MCF 10A (cell line): ENCODE measurements at regions of chrX and their contacts with region 1.

Region 1: DNA sequence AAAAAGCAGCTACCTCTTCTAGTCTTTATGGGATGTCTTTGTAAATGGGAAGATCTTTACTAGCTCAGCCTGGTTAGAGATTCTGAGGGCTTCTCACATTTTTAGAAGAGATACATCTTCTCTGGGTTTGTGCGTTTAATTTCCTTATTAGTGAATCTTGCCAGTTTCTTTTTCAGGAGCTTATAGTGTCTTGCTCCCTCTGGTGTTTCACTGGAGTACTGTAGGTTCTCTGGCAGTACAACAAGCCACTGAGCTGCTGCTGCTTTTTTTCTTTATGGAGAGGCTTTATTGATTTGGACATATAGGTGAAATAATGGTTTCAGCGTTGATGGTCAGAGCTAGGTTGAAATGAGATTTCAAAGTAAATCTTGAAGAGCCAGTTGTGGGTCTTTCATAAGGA is 82.9 kb downstream of the LAS1L start:
- DNase-seq: peak; percentile 44
- H3K4me3 Mint-ChIP-seq: no peak overlapping the region
- H3K27ac Mint-ChIP-seq: no peak overlapping the region
- H3K4me1 Mint-ChIP-seq: no peaks in the 10 kb centered on the region
- H3K27me3 Mint-ChIP-seq: no peaks in the 10 kb centered on the region
- CTCF ChIP-seq: peak; percentile 36

Region 2: GRCh38 chrX:64093761-64094160 is 1357.9 kb before region 1 on chrX:
- CTCF ChIA-PET with region 1: interaction called, 15 read pairs
- POLR2A ChIA-PET with region 1: no interaction called
- intact Hi-C with region 1: no loop called
- DNase-seq: peak; percentile 4
- H3K4me3 Mint-ChIP-seq: no peak overlapping the region
- H3K27ac Mint-ChIP-seq: no peak overlapping the region
- H3K4me1 Mint-ChIP-seq: no peaks in the 10 kb centered on the region
- H3K27me3 Mint-ChIP-seq: no peaks in the 10 kb centered on the region
- CTCF ChIP-seq: peak; percentile 20

Region 3: GRCh38 chrX:64925480-64925879 is 526.2 kb before region 1 on chrX:
- CTCF ChIA-PET with region 1: no interaction called
- POLR2A ChIA-PET with region 1: no interaction called
- intact Hi-C with region 1: no loop called
- DNase-seq: no peak
- H3K4me3 Mint-ChIP-seq: no peak overlapping the region
- H3K27ac Mint-ChIP-seq: no peak overlapping the region
- H3K4me1 Mint-ChIP-seq: no peaks in the 10 kb centered on the region
- H3K27me3 Mint-ChIP-seq: no peaks in the 10 kb centered on the region
- CTCF ChIP-seq: no peak

Region 4: GRCh38 chrX:65241059-65241721 is 210.5 kb before region 1 on chrX:
- CTCF ChIA-PET with region 1: no interaction called
- POLR2A ChIA-PET with region 1: no interaction called
- intact Hi-C with region 1: no loop called
- DNase-seq: no peak
- H3K4me3 Mint-ChIP-seq: no peak overlapping the region
- H3K27ac Mint-ChIP-seq: no peak overlapping the region
- H3K4me1 Mint-ChIP-seq: no peaks in the 10 kb centered on the region
- H3K27me3 Mint-ChIP-seq: no peaks in the 10 kb centered on the region
- CTCF ChIP-seq: no peak

Region 5: GRCh38 chrX:65406532-65406931 is 45.1 kb before region 1 on chrX:
- CTCF ChIA-PET with region 1: no interaction called
- POLR2A ChIA-PET with region 1: no interaction called
- intact Hi-C with region 1: no loop called
- DNase-seq: no peak
- H3K4me3 Mint-ChIP-seq: no peak overlapping the region
- H3K27ac Mint-ChIP-seq: no peak overlapping the region
- H3K4me1 Mint-ChIP-seq: no peaks in the 10 kb centered on the region
- H3K27me3 Mint-ChIP-seq: no peaks in the 10 kb centered on the region
- CTCF ChIP-seq: no peak

Region 6: DNA sequence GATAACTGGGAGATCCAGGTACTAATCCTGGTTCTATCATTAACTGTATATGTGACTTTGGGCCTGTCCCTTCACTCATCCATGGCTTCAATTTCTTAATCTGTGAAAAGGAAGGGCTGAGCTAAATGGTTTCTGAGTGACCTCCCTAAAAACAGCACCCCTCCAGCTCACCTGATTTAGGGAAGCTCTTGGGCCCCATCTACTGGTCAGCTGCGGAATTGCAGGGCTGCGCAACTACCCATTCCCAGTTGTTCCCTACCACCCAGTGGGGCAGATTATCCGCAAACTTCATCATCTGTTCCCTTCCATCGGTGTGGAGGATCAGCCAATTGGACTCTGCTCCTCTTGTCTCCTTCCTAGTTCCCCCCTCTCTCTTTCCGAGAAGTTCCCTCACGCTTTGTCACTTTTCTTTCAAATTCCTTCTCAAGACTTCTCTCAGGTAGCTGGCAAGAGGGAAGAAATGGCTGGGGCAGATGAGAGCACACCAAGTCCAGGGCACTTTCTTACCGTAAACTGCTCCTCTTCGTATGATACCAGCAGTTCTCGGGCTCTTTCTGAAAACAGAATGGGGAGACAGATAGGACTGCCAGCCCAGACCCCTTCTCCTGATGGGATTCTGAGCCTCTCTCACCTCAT is 77.2 kb after region 1 on chrX:
- CTCF ChIA-PET with region 1: interaction called, 15 read pairs
- POLR2A ChIA-PET with region 1: no interaction called
- intact Hi-C with region 1: no loop called
- DNase-seq: peak; percentile 40
- H3K4me3 Mint-ChIP-seq: no peak overlapping the region
- H3K27ac Mint-ChIP-seq: no peak overlapping the region
- H3K4me1 Mint-ChIP-seq: no peaks in the 10 kb centered on the region
- H3K27me3 Mint-ChIP-seq: no peaks in the 10 kb centered on the region
- CTCF ChIP-seq: peak; percentile 94

Region 7: DNA sequence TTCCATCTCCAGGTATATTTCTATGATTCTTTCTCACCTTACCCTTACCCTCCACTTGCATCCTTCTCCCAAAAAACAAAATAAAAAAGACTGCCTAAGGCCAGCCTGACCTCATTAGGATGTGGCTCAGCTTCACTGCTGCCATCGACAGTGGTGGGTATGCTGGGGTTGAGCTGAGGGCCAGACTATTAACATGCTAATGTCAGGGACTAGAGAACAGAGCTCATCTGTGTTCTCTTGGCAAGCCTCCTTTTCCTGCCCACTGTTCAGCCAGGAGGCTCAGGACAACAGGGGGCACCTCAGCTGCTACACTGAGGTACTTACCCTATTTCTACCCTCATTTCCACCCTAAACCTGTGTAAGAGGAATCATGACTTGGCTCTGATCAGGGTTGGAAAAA is 275.0 kb after region 1 on chrX:
- CTCF ChIA-PET with region 1: no interaction called
- POLR2A ChIA-PET with region 1: no interaction called
- intact Hi-C with region 1: no loop called
- DNase-seq: no peak
- H3K4me3 Mint-ChIP-seq: no peak overlapping the region
- H3K27ac Mint-ChIP-seq: no peak overlapping the region
- H3K4me1 Mint-ChIP-seq: peaks cover 5% of the 10 kb centered on the region
- H3K27me3 Mint-ChIP-seq: no peaks in the 10 kb centered on the region
- CTCF ChIP-seq: no peak